ENCODE measurements at regions of chr13 and their contacts with region 1.

Region 1: GRCh38 chr13:48975856-48976575 is at the start of gene FNDC3A:
- DNase-seq: peak; percentile 89
- H3K4me3 Mint-ChIP-seq: peak within 1 kb of the TSS; percentile 96
- H3K27ac Mint-ChIP-seq: peak within 1 kb of the TSS; percentile 98
- H3K4me1 Mint-ChIP-seq: peaks cover 31% of the 10 kb centered on the region
- H3K27me3 Mint-ChIP-seq: peaks cover 4% of the 10 kb centered on the region
- total RNA-seq, gene FNDC3A: 17.1 to 18.3 TPM

Region 2: GRCh38 chr13:48233046-48233907 is 742.7 kb before region 1 on chr13 and contains the start of gene ITM2B:
- CTCF ChIA-PET with region 1: no interaction called
- intact Hi-C with region 1: loop called (anchors 5 kb)
- DNase-seq: peak; percentile 70
- H3K4me3 Mint-ChIP-seq: peak within 1 kb of the TSS; percentile 87
- H3K27ac Mint-ChIP-seq: peak within 1 kb of the TSS; percentile 94
- H3K4me1 Mint-ChIP-seq: peaks cover 60% of the 10 kb centered on the region
- H3K27me3 Mint-ChIP-seq: no peaks in the 10 kb centered on the region
- total RNA-seq, gene ITM2B: 110 to 112 TPM

Region 3: DNA sequence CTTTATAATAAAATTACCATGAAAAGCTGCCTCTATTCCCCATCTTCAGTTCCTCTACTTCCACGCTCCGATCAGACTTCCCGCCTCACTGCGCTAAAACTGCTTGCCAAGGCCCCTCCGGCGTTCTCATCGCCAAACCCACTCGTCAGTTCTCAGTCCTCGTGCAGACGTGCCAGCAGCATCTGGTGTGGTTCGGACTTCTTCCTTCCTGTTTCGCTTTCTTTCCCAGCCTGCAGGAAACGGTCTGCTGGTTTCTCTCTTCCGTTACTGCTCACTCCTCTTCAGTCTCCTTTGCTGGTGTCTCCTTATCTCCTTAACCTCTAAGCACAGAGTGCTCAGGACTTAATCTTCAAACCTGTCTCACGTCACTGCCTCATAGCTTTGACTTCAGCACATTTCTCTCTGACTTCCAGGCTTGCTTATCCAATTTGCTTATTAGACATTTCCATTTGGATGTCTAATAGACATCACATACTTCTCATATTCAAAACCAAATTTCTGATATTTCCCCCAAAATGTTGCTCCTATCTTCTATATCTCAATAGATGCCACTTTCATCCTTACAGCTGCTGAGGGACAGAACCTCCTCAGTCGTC is 483.4 kb before region 1 on chr13:
- CTCF ChIA-PET with region 1: no interaction called
- intact Hi-C with region 1: loop called (anchors 5 kb)
- DNase-seq: peak; percentile 74
- H3K4me3 Mint-ChIP-seq: no peak overlapping the region
- H3K27ac Mint-ChIP-seq: no peak overlapping the region
- H3K4me1 Mint-ChIP-seq: peaks cover 39% of the 10 kb centered on the region
- H3K27me3 Mint-ChIP-seq: no peaks in the 10 kb centered on the region

Region 4: DNA sequence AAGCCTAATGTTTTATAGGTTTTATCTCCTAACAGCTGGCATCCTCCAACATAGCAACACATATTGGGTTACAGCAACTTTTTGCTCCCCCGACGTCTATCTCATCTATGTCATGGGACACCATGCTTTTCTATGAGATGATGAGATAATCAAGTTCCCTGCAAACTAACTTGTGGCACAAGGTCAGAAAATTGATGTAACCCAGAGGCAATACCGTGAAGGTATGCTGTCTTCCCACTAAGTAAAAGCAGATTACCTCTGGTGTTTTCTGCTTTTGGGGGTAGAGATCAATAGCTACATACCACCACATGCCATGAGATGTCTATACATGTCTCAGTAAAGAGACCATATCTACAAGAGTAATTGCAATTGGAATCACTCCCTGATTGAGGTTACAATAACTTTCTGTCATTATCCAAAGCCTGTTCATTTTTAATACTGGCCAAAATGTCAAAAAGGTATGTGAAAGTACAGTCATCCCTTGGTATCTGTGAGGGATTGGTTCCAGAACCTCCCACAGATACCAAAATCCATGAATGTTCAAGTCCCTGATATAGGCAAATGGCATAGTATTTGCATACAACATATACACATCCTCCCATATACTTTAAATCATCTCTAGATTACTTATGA is 191.0 kb before region 1 on chr13:
- CTCF ChIA-PET with region 1: no interaction called
- intact Hi-C with region 1: no loop called
- DNase-seq: no peak
- H3K4me3 Mint-ChIP-seq: no peak overlapping the region
- H3K27ac Mint-ChIP-seq: no peak overlapping the region
- H3K4me1 Mint-ChIP-seq: no peaks in the 10 kb centered on the region
- H3K27me3 Mint-ChIP-seq: peaks cover 5% of the 10 kb centered on the region

Region 5: GRCh38 chr13:48804821-48805601 is 171.0 kb before region 1 on chr13:
- CTCF ChIA-PET with region 1: no interaction called
- intact Hi-C with region 1: loop called (anchors 5 kb)
- DNase-seq: peak; percentile 9
- H3K4me3 Mint-ChIP-seq: no peak overlapping the region
- H3K27ac Mint-ChIP-seq: no peak overlapping the region
- H3K4me1 Mint-ChIP-seq: peaks cover 27% of the 10 kb centered on the region
- H3K27me3 Mint-ChIP-seq: no peaks in the 10 kb centered on the region

Region 6: GRCh38 chr13:48892053-48892690 is 83.8 kb before region 1 on chr13:
- CTCF ChIA-PET with region 1: no interaction called
- intact Hi-C with region 1: loop called (anchors 1 kb)
- DNase-seq: no peak
- H3K4me3 Mint-ChIP-seq: no peak overlapping the region
- H3K27ac Mint-ChIP-seq: peak overlapping the region; percentile 39
- H3K4me1 Mint-ChIP-seq: peaks cover 32% of the 10 kb centered on the region
- H3K27me3 Mint-ChIP-seq: peaks cover 2% of the 10 kb centered on the region

Region 7: DNA sequence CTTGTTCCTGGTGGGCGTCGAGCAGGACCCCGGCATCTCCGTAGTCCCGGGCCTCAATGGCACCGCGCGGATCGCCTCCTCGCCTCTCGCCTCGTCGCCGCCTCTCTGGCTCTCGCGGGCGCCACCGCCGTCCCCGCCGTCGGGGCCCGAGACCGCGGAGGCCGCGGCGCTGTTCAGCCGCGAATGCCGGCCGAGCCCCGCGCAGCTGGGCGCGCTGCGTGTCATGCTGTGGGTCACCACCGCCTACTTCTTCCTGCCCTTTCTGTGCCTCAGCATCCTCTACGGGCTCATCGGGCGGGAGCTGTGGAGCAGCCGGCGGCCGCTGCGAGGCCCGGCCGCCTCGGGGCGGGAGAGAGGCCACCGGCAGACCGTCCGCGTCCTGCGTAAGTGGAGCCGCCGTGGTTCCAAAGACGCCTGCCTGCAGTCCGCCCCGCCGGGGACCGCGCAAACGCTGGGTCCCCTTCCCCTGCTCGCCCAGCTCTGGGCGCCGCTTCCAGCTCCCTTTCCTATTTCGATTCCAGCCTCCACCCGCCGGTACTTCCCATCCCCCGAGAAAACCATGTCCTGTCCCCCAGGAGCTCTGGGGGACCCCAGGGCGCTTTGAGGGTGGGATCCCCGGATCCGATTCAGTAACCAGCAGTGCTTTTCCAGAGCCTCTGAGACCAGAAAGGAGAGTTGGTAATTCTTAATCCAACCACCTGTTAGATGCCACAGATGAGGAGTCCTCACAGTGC is 245.0 kb after region 1 on chr13:
- CTCF ChIA-PET with region 1: no interaction called
- intact Hi-C with region 1: no loop called
- DNase-seq: peak; percentile 21
- H3K4me3 Mint-ChIP-seq: peak overlapping the region; percentile 65
- H3K27ac Mint-ChIP-seq: no peak overlapping the region
- H3K4me1 Mint-ChIP-seq: peaks cover 2% of the 10 kb centered on the region
- H3K27me3 Mint-ChIP-seq: peaks cover 56% of the 10 kb centered on the region

Region 8: GRCh38 chr13:49247643-49248621 is 271.9 kb after region 1 on chr13 and contains the start of gene CDADC1:
- CTCF ChIA-PET with region 1: no interaction called
- intact Hi-C with region 1: loop called (anchors 1 kb)
- DNase-seq: peak; percentile 96
- H3K4me3 Mint-ChIP-seq: peak within 1 kb of the TSS; percentile 98
- H3K27ac Mint-ChIP-seq: peak within 1 kb of the TSS; percentile 92
- H3K4me1 Mint-ChIP-seq: peaks cover 34% of the 10 kb centered on the region
- H3K27me3 Mint-ChIP-seq: no peaks in the 10 kb centered on the region
- total RNA-seq, gene CDADC1: 13.2 to 14.7 TPM

Region 9: DNA sequence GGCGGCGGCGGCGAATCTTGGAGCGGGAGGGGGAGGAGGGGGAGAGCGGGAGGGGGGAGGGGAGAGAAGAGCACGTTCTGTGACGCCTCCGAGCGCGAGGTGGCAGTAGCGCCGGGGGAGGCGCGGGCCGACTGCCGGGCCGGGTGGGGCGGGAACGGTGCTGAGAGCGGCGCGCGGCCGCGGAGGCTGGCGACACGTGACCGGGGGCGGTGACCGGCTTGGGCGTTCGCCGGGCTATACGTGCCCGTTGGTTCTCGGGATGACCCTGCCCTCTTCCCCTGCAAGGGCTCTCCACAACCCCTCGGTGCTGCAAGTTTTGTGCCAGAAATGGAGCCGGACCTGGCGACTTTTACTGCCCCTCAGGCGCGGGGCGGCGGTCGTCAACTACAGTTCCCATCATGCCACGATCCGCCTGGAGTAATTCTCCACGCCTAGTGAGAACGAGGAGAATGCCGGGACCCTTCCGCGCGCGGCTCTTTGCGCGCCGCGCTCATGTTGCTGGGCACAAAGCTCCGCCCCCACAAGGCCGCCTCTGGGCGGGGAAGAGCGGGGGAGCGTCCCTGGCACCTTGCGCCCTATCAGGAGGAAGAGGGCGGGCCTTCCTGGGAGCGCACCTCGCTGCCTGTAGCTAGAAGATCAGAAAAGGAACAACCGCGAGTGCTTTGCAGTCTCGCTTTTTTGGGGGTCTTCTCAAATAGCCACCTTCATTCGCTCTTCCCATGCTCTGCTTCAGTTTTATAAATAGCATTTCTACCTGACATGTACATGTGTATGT is 816.7 kb after region 1 on chr13 and contains the start of gene KPNA3:
- CTCF ChIA-PET with region 1: no interaction called
- intact Hi-C with region 1: loop called (anchors 2 kb)
- DNase-seq: peak; percentile 96
- H3K4me3 Mint-ChIP-seq: peak within 1 kb of the TSS; percentile 92
- H3K27ac Mint-ChIP-seq: peak within 1 kb of the TSS; percentile 94
- H3K4me1 Mint-ChIP-seq: peaks cover 29% of the 10 kb centered on the region
- H3K27me3 Mint-ChIP-seq: peaks cover 4% of the 10 kb centered on the region
- total RNA-seq, gene KPNA3: 47.9 to 50.7 TPM

Measured in activated naive CD4-positive, alpha-beta T cell treated with anti-CD3 and anti-CD28 coated beads for 36 hours (primary cell).